Lower leg skin (tissue), 4 donors: ENCODE measurements at regions of chr17 and their contacts with region 1.

Region 1: GRCh38 chr17:80426681-80427326 is 11.8 kb downstream of the ENDOV start:
- DNase-seq: peak; percentile 30 to 92
- H3K4me3 ChIP-seq: no peak overlapping the region
- CTCF ChIP-seq: peak in 1 of 3 donors; percentile 74
- POLR2A ChIP-seq: no peak

Region 2: GRCh38 chr17:80252607-80253289 is 174.1 kb before region 1 on chr17:
- intact Hi-C with region 1: no loop called
- DNase-seq: no peak
- H3K4me3 ChIP-seq: no peak overlapping the region
- CTCF ChIP-seq: no peak
- POLR2A ChIP-seq: no peak

Region 3: GRCh38 chr17:80316927-80317702 is 109.7 kb before region 1 on chr17:
- intact Hi-C with region 1: no loop called
- DNase-seq: peak in 1 of 2 donors; percentile 79
- H3K4me3 ChIP-seq: no peak overlapping the region
- CTCF ChIP-seq: no peak
- POLR2A ChIP-seq: no peak

Region 4: DNA sequence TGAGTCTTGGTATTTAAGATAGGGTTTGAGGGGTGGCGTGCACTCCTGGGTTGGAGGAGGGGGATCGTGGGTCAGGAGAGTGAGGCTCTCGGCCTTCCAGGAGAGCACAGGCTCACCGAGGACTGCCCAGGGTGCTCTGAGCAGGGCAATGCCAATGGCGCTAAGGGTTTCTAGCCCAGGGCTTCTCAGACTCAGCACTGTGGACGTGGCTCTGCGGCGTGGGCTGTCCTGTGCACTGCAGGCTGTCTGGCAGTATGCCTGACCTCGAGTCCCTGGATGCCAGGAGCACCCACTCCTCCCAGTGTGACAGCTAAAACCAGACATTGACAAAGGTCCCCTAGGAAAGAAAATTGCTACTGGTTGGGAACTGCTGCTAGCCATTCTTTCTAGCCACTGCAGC is 49.0 kb before region 1 on chr17:
- intact Hi-C with region 1: no loop called
- DNase-seq: no peak
- H3K4me3 ChIP-seq: no peak overlapping the region
- CTCF ChIP-seq: no peak
- POLR2A ChIP-seq: no peak

Region 5: DNA sequence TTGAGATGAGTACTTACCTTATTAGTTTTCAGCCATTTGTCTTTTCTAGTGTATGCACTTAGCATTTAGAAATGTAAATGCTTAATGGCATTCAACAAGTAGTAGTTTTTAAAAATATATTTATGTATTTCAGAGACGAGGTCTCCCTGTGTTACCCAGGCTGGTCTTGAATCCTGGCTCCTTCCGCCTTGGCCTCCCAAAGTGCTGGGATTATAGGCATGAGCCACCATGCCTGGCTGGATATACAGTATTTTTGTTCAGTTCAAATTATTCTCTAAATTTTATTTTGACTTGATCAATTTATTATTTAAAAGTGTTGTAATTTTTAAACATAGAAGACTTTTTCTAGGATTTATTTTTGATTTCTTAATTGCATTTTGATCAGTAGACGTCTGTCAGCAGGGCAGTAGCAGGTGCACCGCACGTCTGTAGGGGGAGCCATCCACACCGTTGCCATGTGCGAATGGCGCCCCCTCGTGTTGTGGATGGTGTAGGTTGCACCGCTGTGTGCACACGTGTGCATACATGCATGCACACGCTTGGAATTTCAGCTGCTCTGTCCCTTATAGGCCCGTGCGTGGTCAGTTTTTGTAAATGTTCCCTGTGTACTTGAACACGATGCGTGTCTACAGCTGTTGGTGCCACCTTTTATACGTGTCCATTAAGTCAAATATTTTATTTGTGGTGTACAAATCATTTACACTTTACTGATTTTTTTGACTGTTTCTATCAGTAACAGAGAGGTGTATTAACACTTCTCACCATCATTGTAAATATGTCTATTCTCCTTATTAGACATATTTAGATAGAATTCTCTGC is 148.5 kb after region 1 on chr17:
- intact Hi-C with region 1: loop called (anchors 5 kb)
- DNase-seq: peak; percentile 61 to 95
- H3K4me3 ChIP-seq: no peak overlapping the region
- CTCF ChIP-seq: peak in 2 of 3 donors; percentile 62 to 88
- POLR2A ChIP-seq: no peak

Region 6: GRCh38 chr17:80984749-80985148 is 557.9 kb after region 1 on chr17:
- intact Hi-C with region 1: loop called (anchors 2 kb)
- DNase-seq: peak in 1 of 2 donors; percentile 46
- H3K4me3 ChIP-seq: no peak overlapping the region
- CTCF ChIP-seq: no peak
- POLR2A ChIP-seq: no peak